Activated naive CD4-positive, alpha-beta T cell treated with anti-CD3 and anti-CD28 coated beads for 36 hours (primary cell): ENCODE measurements at regions of chr6 and their contacts with region 1.

Region 1: GRCh38 chr6:56752009-56752408 is 109.3 kb upstream of the DST start:
- DNase-seq: no peak
- H3K4me3 Mint-ChIP-seq: no peak overlapping the region
- H3K27ac Mint-ChIP-seq: no peak overlapping the region
- H3K4me1 Mint-ChIP-seq: peaks cover 9% of the 10 kb centered on the region
- H3K27me3 Mint-ChIP-seq: peaks cover 2% of the 10 kb centered on the region

Region 2: GRCh38 chr6:56843573-56844349 is 91.8 kb after region 1 on chr6:
- CTCF ChIA-PET with region 1: interaction called, 13 read pairs
- intact Hi-C with region 1: no loop called
- DNase-seq: peak; percentile 71
- H3K4me3 Mint-ChIP-seq: peak overlapping the region; percentile 77
- H3K27ac Mint-ChIP-seq: no peak overlapping the region
- H3K4me1 Mint-ChIP-seq: peaks cover 6% of the 10 kb centered on the region
- H3K27me3 Mint-ChIP-seq: peaks cover 32% of the 10 kb centered on the region